HEK293T (cell line): ENCODE measurements at regions of chr9 and their contacts with region 1.

Region 1: GRCh38 chr9:94014065-94014654 is 59.0 kb upstream of the BARX1 start:
- DNase-seq: peak; percentile 57

Region 2: DNA sequence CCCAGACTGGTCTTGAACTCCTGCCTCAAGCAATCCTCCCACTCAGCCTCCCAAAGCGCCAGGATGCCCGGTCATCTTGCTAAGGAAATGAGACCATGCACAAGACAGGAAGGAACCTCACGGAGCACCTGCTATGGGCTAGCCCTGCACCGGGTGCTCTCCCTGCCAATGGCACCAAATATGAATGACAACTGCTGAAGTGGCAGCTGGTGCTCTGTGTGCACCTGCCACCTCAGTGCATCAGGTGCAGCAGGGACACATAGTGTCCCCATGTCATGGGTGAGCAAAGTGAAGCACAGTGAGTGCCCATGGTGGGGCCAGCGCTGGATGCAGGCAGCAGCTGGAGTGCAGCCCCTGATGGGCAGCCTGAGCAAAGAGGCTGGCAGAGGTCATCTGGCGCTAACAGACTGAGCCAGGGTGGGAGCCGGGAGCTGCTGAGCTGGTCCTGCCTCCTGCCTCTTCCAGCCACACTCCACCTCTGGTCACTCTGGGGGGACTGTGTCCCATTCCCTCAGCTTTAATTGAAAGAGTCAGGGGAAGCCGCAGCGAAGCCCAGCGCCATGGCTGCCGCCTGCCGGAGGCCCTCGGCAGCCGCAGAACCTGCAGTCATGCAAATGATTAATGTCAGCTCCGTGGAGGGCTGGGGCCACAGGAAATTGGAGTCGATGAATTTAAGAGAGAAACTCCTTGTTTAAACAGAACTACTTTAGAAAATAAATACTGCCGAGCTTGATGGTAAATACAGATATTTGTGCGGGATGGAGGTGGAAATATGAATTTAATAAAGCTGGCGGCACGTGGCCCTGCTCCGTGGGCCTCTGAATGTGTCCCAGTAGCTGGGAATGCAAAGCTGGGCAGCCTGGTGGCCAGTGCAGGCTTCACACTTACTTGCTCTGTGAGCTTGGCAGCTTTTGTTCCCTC is 105.3 kb before region 1 on chr9:
- CTCF ChIA-PET with region 1: no interaction called
- POLR2A ChIA-PET with region 1: no interaction called
- DNase-seq: no peak

Region 3: GRCh38 chr9:94002316-94003140 is 11.6 kb before region 1 on chr9:
- CTCF ChIA-PET with region 1: interaction called, 10 read pairs
- POLR2A ChIA-PET with region 1: no interaction called
- DNase-seq: peak; percentile 71

Region 4: GRCh38 chr9:94213511-94214124 is 199.5 kb after region 1 on chr9:
- CTCF ChIA-PET with region 1: interaction called, 35 read pairs
- POLR2A ChIA-PET with region 1: no interaction called
- DNase-seq: peak; percentile 86